Cardiac septum (tissue), 1 donor: ENCODE measurements at regions of chr15 and their contacts with region 1.

Region 1: DNA sequence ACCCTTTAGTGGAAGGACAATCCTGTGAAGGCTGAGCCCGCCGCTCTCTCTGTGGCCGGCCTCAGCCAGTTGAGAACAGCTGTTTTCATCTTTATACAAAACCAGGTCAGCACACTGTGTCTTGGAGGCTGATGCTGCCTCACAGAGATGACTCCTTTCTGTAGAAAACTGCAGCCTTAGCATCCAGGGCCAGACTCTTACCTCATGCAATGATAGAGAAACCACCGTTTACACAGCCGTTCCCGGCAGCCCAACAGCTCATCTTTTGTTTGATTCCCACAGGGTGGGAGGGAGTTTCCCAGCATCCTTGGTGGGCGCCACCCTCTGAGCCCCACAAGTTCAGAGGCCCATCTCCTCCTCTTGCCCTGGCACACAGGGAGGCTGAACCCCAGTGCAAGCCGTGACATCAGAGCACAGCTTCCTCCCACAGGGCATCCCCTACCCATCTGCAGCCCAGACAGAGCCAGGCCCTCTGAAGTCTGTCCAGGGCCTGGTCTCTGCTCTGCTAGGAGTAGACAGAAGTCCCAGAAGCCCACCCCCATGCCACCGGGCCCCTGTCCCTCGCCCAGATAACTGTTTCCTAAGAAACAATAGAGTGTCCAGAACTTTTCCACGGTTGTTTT is 105.0 kb downstream of the LRRK1 start:
- DNase-seq: peak; percentile 59

Region 2: DNA sequence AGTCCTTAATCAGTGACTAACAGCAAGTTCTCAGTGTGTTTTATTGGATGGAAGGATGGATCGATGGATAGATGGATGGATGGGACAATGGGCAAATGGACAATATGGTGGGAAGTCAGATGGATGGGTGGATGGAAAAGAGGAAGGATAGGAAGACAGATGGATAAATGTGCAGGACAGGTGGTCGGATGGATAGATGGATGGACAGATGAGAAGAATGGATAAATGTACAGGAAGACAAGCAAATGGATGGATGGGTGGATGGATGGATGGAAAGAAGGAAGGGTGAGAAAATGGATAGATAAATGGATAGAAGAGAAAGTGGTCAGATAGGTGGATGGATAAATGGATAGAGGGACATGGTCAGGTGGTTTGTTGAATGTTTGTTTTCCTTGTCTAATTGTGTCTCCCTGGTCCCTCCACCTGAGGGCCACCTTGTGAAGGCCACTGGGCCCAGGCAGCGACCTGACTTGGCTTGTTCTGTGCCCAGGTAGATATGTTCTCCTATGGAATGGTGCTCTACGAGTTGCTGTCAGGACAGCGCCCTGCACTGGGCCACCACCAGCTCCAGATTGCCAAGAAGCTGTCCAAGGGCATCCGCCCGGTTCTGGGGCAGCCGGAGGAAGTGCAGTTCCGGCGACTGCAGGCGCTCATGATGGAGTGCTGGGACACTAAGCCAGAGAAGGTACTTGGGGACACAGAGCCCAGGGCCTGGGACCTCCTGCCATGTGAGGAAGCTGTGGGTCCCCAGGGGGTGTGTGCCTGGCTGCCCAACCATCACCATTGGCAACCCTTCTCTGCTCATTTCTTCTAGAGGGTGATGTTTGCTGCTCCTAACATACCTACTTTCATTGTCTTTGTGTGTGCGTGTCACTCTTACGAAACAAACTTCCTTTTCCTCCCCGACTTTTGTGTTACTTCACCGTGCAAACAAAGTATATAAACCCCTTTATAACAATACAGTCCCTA is 32.5 kb after region 1 on chr15:
- intact Hi-C with region 1: no loop called
- DNase-seq: no peak

Region 3: GRCh38 chr15:101167753-101168463 is 143.7 kb after region 1 on chr15:
- intact Hi-C with region 1: loop called (anchors 5 kb)
- DNase-seq: peak; percentile 92